Activated T-helper 1 cell treated with anti-CD3 and anti-CD28 coated beads, Interleukin-12 subunit alpha, Interleukin-12 subunit beta, Interleukin-2, Interleukin-4 antibody, amounts not matched to agents 30 ng/mL and 10 ng/mL and 1 ng/mL, durations not matched to agents 14 hours and 24 hours and 36 hours (primary cell): ENCODE measurements at regions of chr6 and their contacts with region 1.

Region 1: GRCh38 chr6:15911753-15912504 is 217.0 kb upstream of the MYLIP start:
- DNase-seq: peak; percentile 15
- H3K4me3 Mint-ChIP-seq: no peak overlapping the region
- H3K27ac Mint-ChIP-seq: peak overlapping the region; percentile 24
- H3K4me1 Mint-ChIP-seq: peaks cover 13% of the 10 kb centered on the region
- H3K27me3 Mint-ChIP-seq: no peaks in the 10 kb centered on the region

Region 2: DNA sequence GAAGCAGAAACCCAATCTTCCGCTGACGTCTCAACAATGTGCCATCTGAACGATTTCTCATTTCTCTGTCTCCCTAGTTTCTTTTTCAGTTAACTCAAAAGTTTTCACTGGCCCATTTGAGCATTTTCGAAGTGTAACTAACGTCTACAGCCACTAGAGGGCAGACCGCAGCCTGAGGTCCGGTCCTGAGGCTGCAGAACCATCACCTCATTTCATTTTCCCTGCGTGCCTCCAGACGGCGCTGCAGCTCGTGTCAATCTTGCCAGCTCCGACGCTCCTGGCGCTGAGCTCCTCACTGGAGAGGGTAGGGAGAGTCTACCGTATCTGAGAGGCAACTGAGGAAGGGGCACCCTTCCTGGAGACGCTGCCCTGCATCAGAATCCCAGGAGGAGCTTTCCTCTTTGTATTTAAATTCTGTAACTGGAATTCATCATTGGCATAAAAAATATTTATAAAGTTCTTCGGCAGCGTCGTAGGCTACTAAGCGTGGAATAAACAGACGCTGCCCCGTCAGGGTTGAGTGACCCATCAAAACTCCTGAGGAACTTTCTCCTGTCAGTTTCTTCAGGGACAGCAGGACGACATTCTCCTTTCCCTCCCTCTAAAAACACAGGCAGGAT is 220.6 kb before region 1 on chr6:
- intact Hi-C with region 1: loop called (anchors 1 kb)
- DNase-seq: peak; percentile 76
- H3K4me3 Mint-ChIP-seq: no peak overlapping the region
- H3K27ac Mint-ChIP-seq: no peak overlapping the region
- H3K4me1 Mint-ChIP-seq: peaks cover 16% of the 10 kb centered on the region
- H3K27me3 Mint-ChIP-seq: peaks cover 7% of the 10 kb centered on the region

Region 3: DNA sequence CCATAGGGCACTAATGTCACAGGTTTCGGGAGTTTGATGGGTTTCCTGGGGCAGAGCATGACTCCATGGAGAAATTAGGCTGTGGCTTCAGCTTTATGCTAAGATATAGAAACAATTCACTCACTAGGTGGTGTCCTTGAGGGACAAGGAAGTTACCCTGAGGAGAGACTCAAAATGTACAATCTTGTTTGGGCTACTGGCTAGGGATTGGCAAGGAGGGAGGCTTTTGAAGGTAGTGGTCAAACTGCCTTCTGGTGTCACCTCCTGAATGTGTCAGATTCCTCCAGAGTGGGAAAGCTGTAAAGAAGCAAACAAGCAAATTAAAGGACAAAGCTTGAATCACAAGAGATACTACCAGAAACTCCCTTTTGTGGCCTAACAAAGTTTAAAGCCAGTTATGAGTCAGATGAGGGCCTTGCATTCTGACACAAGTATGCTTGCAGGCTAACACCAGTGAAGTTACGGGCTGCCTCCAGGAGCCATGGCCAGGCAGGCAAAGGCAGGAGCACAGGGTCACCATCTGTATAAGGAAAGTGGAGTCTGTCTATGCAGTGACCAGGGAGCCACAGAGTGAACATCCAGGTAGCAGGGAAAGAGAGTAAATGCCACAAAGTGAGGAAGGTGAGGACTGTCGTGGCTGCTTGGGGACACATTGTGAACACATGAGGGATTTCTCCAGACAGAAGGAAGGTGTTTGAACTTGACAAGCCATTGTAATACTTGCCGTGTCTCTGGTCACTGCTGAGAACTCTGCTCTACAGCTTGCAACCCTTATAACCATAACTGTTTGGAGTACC is 141.4 kb before region 1 on chr6:
- intact Hi-C with region 1: loop called (anchors 1 kb)
- DNase-seq: no peak
- H3K4me3 Mint-ChIP-seq: no peak overlapping the region
- H3K27ac Mint-ChIP-seq: peak overlapping the region; percentile 90
- H3K4me1 Mint-ChIP-seq: peaks cover 28% of the 10 kb centered on the region
- H3K27me3 Mint-ChIP-seq: no peaks in the 10 kb centered on the region

Region 4: GRCh38 chr6:15901141-15902115 is 10.5 kb before region 1 on chr6:
- intact Hi-C with region 1: loop called (anchors 1 kb)
- DNase-seq: peak; percentile 44
- H3K4me3 Mint-ChIP-seq: peak overlapping the region; percentile 50
- H3K27ac Mint-ChIP-seq: peak overlapping the region; percentile 87
- H3K4me1 Mint-ChIP-seq: peaks cover 42% of the 10 kb centered on the region
- H3K27me3 Mint-ChIP-seq: no peaks in the 10 kb centered on the region

Region 5: GRCh38 chr6:15994814-15995459 is 83.0 kb after region 1 on chr6:
- intact Hi-C with region 1: loop called (anchors 2 kb)
- DNase-seq: no peak
- H3K4me3 Mint-ChIP-seq: no peak overlapping the region
- H3K27ac Mint-ChIP-seq: peak overlapping the region; percentile 81
- H3K4me1 Mint-ChIP-seq: peaks cover 22% of the 10 kb centered on the region
- H3K27me3 Mint-ChIP-seq: peaks cover 8% of the 10 kb centered on the region

Region 6: DNA sequence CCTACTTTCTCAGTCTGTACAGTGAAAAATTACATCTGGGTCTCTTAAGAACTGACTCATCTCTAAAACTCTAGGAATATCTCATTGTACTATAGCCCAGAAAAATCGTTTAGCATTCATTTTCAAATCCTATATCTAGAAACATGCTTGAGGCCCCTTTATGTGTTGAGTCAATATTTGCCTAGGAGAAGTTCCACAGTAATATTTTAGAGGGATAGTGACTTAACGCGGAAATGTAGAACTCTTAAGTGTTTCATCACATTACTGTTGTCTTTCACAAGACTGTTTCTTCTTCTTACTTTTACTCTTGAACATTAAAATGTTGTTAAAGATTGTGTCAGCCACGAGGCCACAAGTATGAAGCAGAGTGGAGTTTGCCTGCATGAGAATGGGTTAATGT is 193.9 kb after region 1 on chr6:
- intact Hi-C with region 1: no loop called
- DNase-seq: no peak
- H3K4me3 Mint-ChIP-seq: no peak overlapping the region
- H3K27ac Mint-ChIP-seq: no peak overlapping the region
- H3K4me1 Mint-ChIP-seq: no peaks in the 10 kb centered on the region
- H3K27me3 Mint-ChIP-seq: peaks cover 2% of the 10 kb centered on the region

Region 7: GRCh38 chr6:16374461-16375195 is 462.7 kb after region 1 on chr6:
- intact Hi-C with region 1: no loop called
- DNase-seq: no peak
- H3K4me3 Mint-ChIP-seq: no peak overlapping the region
- H3K27ac Mint-ChIP-seq: no peak overlapping the region
- H3K4me1 Mint-ChIP-seq: peaks cover 10% of the 10 kb centered on the region
- H3K27me3 Mint-ChIP-seq: peaks cover 2% of the 10 kb centered on the region